Heart right ventricle (tissue), 16 donors: ENCODE measurements at regions of chr15 and their contacts with region 1.

Region 1: DNA sequence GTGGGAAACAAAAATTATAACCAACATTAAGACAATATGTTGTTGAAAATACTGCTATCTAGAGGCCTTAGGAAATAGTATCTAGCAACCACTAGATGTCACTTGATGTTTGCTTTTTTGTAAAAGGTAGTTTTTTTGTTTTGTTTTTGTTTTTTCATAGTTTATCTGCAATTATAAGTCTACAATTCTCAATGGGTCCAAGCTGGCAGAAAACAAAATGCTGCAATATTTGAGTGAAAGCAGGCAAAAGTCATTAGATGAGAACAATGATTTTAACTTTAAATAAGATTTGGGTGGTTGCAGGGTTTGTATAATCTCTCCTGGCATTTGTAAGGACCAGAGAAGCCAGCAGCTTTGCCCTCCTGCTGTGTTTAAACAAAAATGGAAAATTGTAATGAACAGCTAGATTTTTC is 27.0 kb downstream of the DUT start:
- DNase-seq: no peak
- ATAC-seq: peak in 6 of 8 donors; percentile 33 to 71 (median 58)
- H3K4me3 ChIP-seq: no peak overlapping the region
- H3K27ac ChIP-seq: peak overlapping the region in 6 of 10 donors; percentile 31 to 54 (median 42)
- H3K4me1 ChIP-seq: peaks cover 0 to 24% (median 5%) of the 10 kb centered on the region in 9 donors
- H3K27me3 ChIP-seq: no peaks in the 10 kb centered on the region
- CTCF ChIP-seq: peak; percentile 24 to 75 (median 59)

Region 2: DNA sequence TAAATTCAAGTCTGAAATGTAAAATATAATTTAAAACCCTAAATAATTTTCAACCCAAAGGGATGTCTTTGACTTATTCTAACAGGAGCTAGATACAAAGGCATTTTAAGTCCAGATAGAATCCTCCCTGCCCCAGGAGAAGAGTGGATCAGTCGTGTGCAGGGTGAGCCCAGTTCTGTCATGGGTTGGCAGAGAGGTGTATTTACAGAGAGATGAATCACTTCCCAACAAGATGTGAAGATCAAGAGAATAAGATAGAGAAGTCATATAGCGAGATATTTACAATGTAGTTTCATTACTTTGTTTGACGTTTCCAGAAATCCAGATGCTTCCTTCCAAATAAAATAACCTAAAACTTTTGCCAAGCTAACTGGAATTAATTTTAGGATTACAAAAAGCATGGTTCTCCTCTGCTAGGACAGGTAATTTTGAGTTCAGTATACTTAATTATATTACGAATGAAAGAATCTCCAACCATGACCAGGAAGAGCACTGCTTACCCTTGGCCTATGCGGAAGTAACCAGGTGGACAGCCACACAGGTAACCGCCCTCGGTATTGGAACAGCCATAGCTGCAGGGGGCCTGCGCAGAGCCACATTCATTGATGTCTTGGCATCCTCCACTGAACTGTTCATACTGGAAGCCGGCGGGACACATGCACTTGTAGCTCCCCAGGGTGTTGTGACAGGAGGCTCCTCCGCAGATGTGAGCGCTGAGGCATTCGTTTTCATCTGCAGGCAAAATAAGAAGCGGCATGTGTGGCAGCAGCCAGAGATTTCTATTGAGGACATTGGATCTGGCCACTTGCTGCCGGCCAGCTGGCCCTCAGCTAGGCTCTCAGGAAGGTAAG is 57.0 kb after region 1 on chr15:
- intact Hi-C with region 1: loop called in 1 of 10 experiments (anchors 5 kb)
- DNase-seq: no peak
- ATAC-seq: no peak
- H3K4me3 ChIP-seq: no peak overlapping the region
- H3K27ac ChIP-seq: peak overlapping the region in 1 of 10 donors; percentile 60
- H3K4me1 ChIP-seq: peaks cover 0 to 29% (median 14%) of the 10 kb centered on the region in 9 donors
- H3K27me3 ChIP-seq: no peaks in the 10 kb centered on the region
- CTCF ChIP-seq: no peak

Region 3: DNA sequence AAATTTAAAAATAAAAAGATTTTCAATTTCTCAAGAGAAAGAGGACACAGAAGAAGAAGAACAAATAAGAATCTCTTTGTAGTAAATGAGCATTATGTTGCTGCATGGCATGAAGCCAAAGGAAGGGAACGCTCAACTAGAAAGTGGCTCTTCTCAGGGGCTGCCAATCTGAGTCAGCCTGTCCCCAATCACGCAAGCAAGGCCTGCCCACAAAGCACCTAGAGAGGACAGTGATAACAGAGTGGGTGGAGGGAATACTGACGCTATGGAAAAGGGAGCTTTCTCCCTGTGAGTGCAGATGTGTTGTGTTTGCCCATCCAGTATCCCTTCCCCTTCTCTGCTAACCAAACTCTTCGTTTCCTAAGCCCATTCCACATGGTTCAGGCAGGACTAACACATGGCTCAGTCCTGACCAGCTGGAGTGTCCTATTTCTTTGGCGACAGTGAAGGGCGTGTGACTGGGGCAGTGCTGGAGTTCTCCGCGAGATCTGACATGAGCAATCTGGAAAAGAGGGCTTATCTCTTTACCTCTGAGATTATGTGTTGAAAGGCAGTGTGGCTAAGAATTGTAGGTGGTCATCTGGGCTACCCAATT is 273.0 kb after region 1 on chr15:
- intact Hi-C with region 1: loop called in 1 of 10 experiments (anchors 10 kb)
- DNase-seq: no peak
- ATAC-seq: peak; percentile 40 to 75 (median 61)
- H3K4me3 ChIP-seq: no peak overlapping the region
- H3K27ac ChIP-seq: peak overlapping the region in 1 of 10 donors; percentile 29
- H3K4me1 ChIP-seq: peaks cover 0 to 56% (median 16%) of the 10 kb centered on the region in 9 donors
- H3K27me3 ChIP-seq: no peaks in the 10 kb centered on the region
- CTCF ChIP-seq: no peak

Region 4: GRCh38 chr15:48794697-48795134 is 436.5 kb after region 1 on chr15:
- intact Hi-C with region 1: loop called in 2 of 10 experiments (anchors 5 kb)
- DNase-seq: no peak
- ATAC-seq: peak in 5 of 8 donors; percentile 42 to 70 (median 52)
- H3K4me3 ChIP-seq: peak overlapping the region in 2 of 10 donors; percentile 5 to 11
- H3K27ac ChIP-seq: peak overlapping the region in 6 of 10 donors; percentile 22 to 87 (median 35)
- H3K4me1 ChIP-seq: peaks cover 0 to 30% (median 5%) of the 10 kb centered on the region in 9 donors
- H3K27me3 ChIP-seq: no peaks in the 10 kb centered on the region
- CTCF ChIP-seq: no peak

Region 5: GRCh38 chr15:48800811-48801455 is 442.7 kb after region 1 on chr15:
- intact Hi-C with region 1: loop called (anchors 2 to 10 kb)
- DNase-seq: no peak
- ATAC-seq: peak in 2 of 8 donors; percentile 49 to 53
- H3K4me3 ChIP-seq: no peak overlapping the region
- H3K27ac ChIP-seq: peak overlapping the region in 2 of 10 donors; percentile 7 to 8
- H3K4me1 ChIP-seq: peaks cover 0 to 24% (median 2%) of the 10 kb centered on the region in 9 donors
- H3K27me3 ChIP-seq: no peaks in the 10 kb centered on the region
- CTCF ChIP-seq: peak; percentile 7 to 67 (median 57)

Region 6: DNA sequence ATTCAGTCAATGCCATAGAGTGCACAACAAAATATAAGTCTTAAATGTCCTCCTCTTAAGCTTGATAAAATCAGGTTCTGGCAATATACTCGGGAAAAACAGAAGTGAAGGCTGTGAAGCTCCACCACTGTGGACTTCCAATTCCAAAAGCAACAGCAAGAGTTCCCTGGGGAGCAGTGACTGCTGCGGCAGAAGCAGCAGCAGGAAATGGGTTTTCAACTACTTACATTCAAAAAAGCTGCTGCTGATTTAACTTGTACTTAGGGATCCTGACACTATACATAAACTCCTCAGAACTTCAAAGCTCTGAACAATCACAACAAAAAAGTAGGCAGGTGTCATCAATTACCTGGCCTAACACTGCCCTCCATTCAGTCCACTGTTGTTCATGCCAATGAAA is 447.9 kb after region 1 on chr15:
- intact Hi-C with region 1: loop called in 8 of 10 experiments (anchors 2 to 10 kb)
- DNase-seq: peak in 1 of 2 donors; percentile 62
- ATAC-seq: no peak
- H3K4me3 ChIP-seq: no peak overlapping the region
- H3K27ac ChIP-seq: no peak overlapping the region
- H3K4me1 ChIP-seq: peaks cover 0 to 26% (median 17%) of the 10 kb centered on the region in 9 donors
- H3K27me3 ChIP-seq: no peaks in the 10 kb centered on the region
- CTCF ChIP-seq: no peak

Region 7: DNA sequence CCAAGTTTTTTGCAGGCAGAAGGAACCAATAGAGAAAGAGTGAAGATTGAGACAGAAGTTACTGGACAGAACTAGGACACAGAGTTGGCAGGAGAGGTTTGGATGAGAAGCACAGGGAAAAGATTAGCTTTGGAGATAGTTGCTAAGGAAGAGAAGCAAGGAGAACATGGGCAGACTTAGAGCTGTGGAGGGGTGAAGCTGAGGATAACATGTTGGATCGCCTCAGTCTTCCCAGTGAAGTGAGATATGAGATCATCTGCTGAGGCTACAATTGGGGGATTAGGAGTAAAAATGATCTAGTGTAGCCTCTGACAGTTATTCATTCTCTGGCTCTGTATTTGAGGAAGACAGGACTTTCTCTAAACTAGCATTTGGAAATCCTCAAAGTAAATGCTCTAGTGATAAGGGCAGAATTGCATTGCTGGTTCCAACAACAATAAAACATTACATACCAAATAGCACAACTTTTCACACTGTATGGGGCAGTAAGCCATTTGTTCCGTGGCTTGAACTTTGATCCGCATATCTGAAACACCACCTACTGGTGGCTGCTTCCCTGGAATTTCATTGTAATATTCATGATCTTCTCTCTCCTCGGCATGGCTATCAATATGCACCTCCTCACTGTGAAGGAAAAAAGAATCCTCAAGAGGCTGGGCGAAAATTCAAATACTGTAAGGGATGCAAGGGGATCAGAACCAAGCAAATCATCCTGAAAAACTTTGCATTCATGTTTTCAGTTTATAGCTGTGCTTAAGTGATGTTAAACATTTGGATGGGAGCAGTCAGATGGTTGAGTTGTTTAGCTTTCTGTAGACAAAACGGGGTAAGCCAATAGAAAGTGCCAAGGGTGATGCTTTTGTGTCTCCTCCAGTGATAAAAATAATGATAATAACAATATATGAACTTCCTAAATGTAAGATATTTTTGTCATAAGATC is 497.5 kb after region 1 on chr15:
- intact Hi-C with region 1: loop called in 2 of 10 experiments (anchors 5 to 10 kb)
- DNase-seq: peak in 1 of 2 donors; percentile 16
- ATAC-seq: peak in 7 of 8 donors; percentile 68 to 89 (median 80)
- H3K4me3 ChIP-seq: no peak overlapping the region
- H3K27ac ChIP-seq: peak overlapping the region in 1 of 10 donors; percentile 10
- H3K4me1 ChIP-seq: peaks cover 0 to 13% (median 0%) of the 10 kb centered on the region in 9 donors
- H3K27me3 ChIP-seq: no peaks in the 10 kb centered on the region
- CTCF ChIP-seq: peak in 7 of 9 donors; percentile 37 to 60 (median 49)